Activated naive CD4-positive, alpha-beta T cell treated with anti-CD3 and anti-CD28 coated beads for 36 hours (primary cell): ENCODE measurements at regions of chr6 and their contacts with region 1.

Region 1: GRCh38 chr6:153947808-153948447 is 91.1 kb upstream of the OPRM1 start:
- DNase-seq: peak; percentile 24
- H3K4me3 Mint-ChIP-seq: no peak overlapping the region
- H3K27ac Mint-ChIP-seq: no peak overlapping the region
- H3K4me1 Mint-ChIP-seq: no peaks in the 10 kb centered on the region
- H3K27me3 Mint-ChIP-seq: peaks cover 4% of the 10 kb centered on the region

Region 2: GRCh38 chr6:152775428-152775827 is 1172.5 kb before region 1 on chr6:
- CTCF ChIA-PET with region 1: no interaction called
- intact Hi-C with region 1: no loop called
- DNase-seq: no peak
- H3K4me3 Mint-ChIP-seq: no peak overlapping the region
- H3K27ac Mint-ChIP-seq: no peak overlapping the region
- H3K4me1 Mint-ChIP-seq: no peaks in the 10 kb centered on the region
- H3K27me3 Mint-ChIP-seq: no peaks in the 10 kb centered on the region

Region 3: GRCh38 chr6:153032255-153032882 is 915.6 kb before region 1 on chr6:
- CTCF ChIA-PET with region 1: no interaction called
- intact Hi-C with region 1: loop called (anchors 1 kb)
- DNase-seq: no peak
- H3K4me3 Mint-ChIP-seq: no peak overlapping the region
- H3K27ac Mint-ChIP-seq: no peak overlapping the region
- H3K4me1 Mint-ChIP-seq: no peaks in the 10 kb centered on the region
- H3K27me3 Mint-ChIP-seq: peaks cover 7% of the 10 kb centered on the region

Region 4: GRCh38 chr6:153312641-153313040 is 635.3 kb before region 1 on chr6:
- CTCF ChIA-PET with region 1: no interaction called
- intact Hi-C with region 1: loop called (anchors 5 kb)
- DNase-seq: peak; percentile 54
- H3K4me3 Mint-ChIP-seq: no peak overlapping the region
- H3K27ac Mint-ChIP-seq: no peak overlapping the region
- H3K4me1 Mint-ChIP-seq: no peaks in the 10 kb centered on the region
- H3K27me3 Mint-ChIP-seq: no peaks in the 10 kb centered on the region

Region 5: DNA sequence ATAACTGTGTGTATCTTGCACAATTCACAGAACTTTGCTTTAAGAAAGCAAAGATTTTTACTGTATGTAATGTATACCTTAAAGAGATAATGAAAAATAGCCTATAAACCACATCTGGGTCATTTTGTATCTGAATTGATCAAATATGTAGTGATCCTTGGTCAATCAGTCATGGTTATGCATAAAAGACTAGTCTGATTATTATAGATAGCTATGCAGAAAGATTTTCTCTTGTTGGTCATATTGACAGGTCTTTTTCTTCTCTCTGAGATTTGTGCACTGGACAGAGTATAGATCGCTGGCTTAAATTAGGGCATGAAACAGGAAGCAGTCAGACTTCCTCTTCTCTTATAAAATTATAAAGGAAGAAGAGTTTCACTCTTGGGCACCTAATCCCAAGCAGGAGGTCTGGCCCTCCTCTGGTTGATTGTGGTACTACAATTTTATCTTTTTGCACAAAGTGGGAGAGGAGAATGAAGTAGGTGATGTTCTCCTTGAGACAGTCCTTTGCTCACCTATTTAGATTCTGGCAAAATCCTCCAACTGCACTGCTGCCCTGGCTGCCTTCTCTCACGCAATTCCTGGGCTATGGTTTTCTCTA is 435.9 kb before region 1 on chr6:
- CTCF ChIA-PET with region 1: interaction called, 3 read pairs
- intact Hi-C with region 1: loop called (anchors 2 kb)
- DNase-seq: no peak
- H3K4me3 Mint-ChIP-seq: no peak overlapping the region
- H3K27ac Mint-ChIP-seq: no peak overlapping the region
- H3K4me1 Mint-ChIP-seq: no peaks in the 10 kb centered on the region
- H3K27me3 Mint-ChIP-seq: no peaks in the 10 kb centered on the region

Region 6: DNA sequence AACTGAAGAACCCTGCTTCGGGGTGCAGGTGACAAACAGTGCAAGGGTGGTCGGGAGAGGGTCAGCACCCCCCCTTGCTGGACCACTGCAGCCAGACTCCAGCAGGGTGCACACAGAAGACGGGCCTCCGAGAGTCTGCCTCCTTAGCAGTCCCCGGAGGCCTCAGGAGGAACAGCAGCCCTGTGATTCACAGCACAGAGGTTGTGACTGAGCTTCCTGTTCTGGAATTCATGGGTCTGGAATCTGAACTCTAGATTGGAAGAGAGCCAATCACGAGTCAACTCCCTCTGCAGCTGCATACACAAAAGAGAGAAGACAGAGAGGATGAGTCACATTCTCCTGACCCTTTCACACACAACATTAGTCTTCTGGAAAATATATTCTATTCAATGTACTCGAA is 157.9 kb before region 1 on chr6:
- CTCF ChIA-PET with region 1: no interaction called
- intact Hi-C with region 1: loop called (anchors 5 kb)
- DNase-seq: no peak
- H3K4me3 Mint-ChIP-seq: no peak overlapping the region
- H3K27ac Mint-ChIP-seq: no peak overlapping the region
- H3K4me1 Mint-ChIP-seq: no peaks in the 10 kb centered on the region
- H3K27me3 Mint-ChIP-seq: peaks cover 6% of the 10 kb centered on the region

Region 7: DNA sequence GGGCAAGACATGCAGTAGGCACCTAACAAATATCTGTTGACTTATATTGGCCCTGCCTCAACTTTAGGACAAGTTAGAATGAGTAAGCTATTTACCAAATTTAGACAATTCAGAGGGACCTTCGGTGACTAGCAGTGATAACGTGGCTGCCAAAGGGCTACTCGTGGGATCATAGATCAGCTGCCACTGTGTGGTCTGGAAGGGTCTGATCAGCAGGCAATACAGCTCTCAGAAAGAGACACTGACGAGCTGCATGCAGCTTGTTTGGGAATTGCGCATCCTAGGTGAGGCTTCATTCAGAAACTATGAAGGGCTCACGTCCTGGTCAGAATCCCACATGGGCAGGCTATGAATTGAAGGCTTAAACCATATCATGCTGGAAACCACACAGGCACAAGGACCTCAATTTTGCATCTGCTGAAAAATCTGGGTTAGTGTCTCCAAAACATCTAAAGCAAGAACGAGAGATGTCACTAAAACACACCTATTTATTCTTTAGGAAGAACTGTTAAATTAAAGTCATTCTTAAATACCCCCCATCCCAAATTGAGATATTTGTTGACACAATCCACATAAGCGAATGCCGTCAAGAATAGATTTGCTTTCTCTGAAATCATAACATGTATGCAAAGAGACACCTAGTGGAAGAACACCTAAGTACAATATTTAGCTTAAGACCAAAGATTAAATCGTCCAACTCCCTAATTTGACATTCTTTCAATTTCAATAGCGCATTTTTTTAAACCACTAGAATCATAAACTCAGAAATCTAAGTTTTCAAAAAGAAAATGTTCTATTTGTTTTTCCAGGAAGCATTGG is 329.1 kb after region 1 on chr6:
- CTCF ChIA-PET with region 1: no interaction called
- intact Hi-C with region 1: loop called (anchors 5 kb)
- DNase-seq: no peak
- H3K4me3 Mint-ChIP-seq: peak overlapping the region; percentile 65
- H3K27ac Mint-ChIP-seq: no peak overlapping the region
- H3K4me1 Mint-ChIP-seq: peaks cover 34% of the 10 kb centered on the region
- H3K27me3 Mint-ChIP-seq: no peaks in the 10 kb centered on the region